ENCODE measurements at regions of chr1 and their contacts with region 1.

Region 1: GRCh38 chr1:210448297-210448892 is 119.7 kb downstream of the HHAT start:
- DNase-seq: peak in 4 of 5 donors; percentile 10 to 18 (median 12)
- H3K4me3 ChIP-seq: no peak overlapping the region
- H3K4me3 Mint-ChIP-seq: no peak overlapping the region
- H3K27ac ChIP-seq: no peak overlapping the region
- H3K27ac Mint-ChIP-seq: no peak overlapping the region
- H3K4me1 ChIP-seq: peaks cover 14% of the 10 kb centered on the region
- H3K4me1 Mint-ChIP-seq: peaks cover 7 to 19% (median 12%) of the 10 kb centered on the region in 4 donors
- H3K27me3 ChIP-seq: no peaks in the 10 kb centered on the region
- H3K27me3 Mint-ChIP-seq: peaks cover 0 to under 1% of the 10 kb centered on the region in 2 donors

Region 2: DNA sequence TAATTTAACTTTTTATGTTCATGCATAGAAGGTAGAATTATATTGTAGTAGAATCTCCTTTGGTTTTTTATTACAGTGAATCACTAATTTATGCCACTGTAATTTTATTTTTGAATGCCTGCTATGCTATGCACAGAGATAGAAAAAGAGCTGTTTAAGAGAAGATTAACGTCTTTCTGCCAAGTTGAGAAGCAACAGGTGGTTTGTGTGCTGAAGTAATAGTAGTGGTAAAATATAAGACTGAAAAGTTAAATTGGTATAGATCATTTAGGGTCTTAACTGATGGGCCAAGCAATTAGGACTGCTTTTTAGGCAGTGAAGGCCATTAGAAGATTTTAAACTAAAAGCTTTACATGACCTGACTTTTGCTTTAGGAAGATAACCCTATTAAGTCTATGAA is 395.3 kb before region 1 on chr1:
- CTCF ChIA-PET with region 1: no interaction called
- POLR2A ChIA-PET with region 1: no interaction called
- intact Hi-C with region 1: no loop called
- DNase-seq: no peak
- H3K4me3 ChIP-seq: no peak overlapping the region
- H3K4me3 Mint-ChIP-seq: no peak overlapping the region
- H3K27ac ChIP-seq: no peak overlapping the region
- H3K27ac Mint-ChIP-seq: no peak overlapping the region
- H3K4me1 ChIP-seq: no peaks in the 10 kb centered on the region
- H3K4me1 Mint-ChIP-seq: no peaks in the 10 kb centered on the region
- H3K27me3 ChIP-seq: peaks cover 4% of the 10 kb centered on the region
- H3K27me3 Mint-ChIP-seq: peaks cover 2 to 6% of the 10 kb centered on the region in 2 donors

Region 3: DNA sequence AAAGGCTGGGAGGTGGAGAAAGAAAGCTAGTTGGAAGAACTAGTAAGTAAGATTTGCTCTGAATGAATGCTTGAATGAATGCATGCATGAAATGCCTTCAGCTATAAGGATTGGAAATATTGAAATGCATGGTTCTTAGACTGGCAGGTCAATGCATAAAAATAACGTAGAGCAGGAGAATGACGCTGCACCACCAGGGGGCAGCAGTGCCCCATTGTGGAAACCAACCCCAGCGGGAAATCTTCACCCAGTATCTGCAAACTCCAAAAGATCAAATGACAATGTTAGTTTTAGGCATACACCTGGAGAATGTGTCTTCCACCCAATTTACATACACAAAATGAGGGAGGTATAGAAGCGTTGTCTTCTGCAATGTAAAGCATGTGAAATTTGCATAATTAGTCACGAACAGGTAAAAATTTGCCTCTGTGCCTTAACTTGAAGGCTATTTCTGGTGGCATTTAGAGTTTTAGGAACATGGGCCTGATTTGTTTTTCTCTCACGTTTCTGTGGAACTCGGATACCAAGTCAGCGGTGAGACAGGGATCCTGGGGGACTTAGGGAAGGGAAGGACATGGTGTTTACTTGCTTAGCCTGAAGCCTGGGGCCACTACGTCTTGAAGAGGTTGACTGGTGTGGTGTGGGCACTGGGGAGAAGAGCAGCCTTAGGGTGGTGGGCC is 41.0 kb before region 1 on chr1:
- CTCF ChIA-PET with region 1: interaction called, 5 read pairs
- POLR2A ChIA-PET with region 1: no interaction called
- intact Hi-C with region 1: loop called (anchors 1 kb)
- DNase-seq: peak; percentile 54 to 71 (median 62)
- H3K4me3 ChIP-seq: no peak overlapping the region
- H3K4me3 Mint-ChIP-seq: no peak overlapping the region
- H3K27ac ChIP-seq: no peak overlapping the region
- H3K27ac Mint-ChIP-seq: no peak overlapping the region
- H3K4me1 ChIP-seq: no peaks in the 10 kb centered on the region
- H3K4me1 Mint-ChIP-seq: peaks cover 0 to 2% (median under 1%) of the 10 kb centered on the region in 4 donors
- H3K27me3 ChIP-seq: no peaks in the 10 kb centered on the region
- H3K27me3 Mint-ChIP-seq: no peaks in the 10 kb centered on the region

Region 4: DNA sequence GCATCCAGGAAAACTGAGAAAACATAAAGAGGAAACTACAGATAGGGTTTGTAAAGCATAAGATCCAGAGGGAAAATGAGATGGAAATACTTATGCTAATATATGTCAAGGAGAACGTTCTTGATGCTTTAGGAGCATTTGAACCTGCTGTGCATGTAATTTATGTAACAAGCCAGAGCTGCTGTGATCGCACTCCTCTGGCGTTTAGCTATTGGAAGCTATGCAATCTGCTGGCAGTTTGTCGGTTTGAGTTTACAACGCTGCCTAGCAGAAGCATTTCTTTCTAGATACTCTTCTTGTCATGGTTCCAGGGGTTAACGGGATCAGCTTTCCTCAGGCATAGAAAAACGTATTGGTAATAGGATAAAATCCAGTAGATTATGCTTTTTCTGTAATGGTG is 502.9 kb after region 1 on chr1:
- CTCF ChIA-PET with region 1: interaction called, 3 read pairs
- POLR2A ChIA-PET with region 1: no interaction called
- intact Hi-C with region 1: loop called (anchors 2 kb)
- DNase-seq: no peak
- H3K4me3 ChIP-seq: no peak overlapping the region
- H3K4me3 Mint-ChIP-seq: no peak overlapping the region
- H3K27ac ChIP-seq: no peak overlapping the region
- H3K27ac Mint-ChIP-seq: no peak overlapping the region
- H3K4me1 ChIP-seq: no peaks in the 10 kb centered on the region
- H3K4me1 Mint-ChIP-seq: no peaks in the 10 kb centered on the region
- H3K27me3 ChIP-seq: no peaks in the 10 kb centered on the region
- H3K27me3 Mint-ChIP-seq: peaks cover 3 to 7% of the 10 kb centered on the region in 2 donors

Measured in CD4-positive, alpha-beta memory T cell (primary cell).